B cell (primary cell): ENCODE measurements at regions of chr5 and their contacts with region 1.

Region 1: GRCh38 chr5:170791325-170791954 is 7.9 kb downstream of the GABRP start:
- DNase-seq: peak; percentile 32
- ATAC-seq: no peak
- H3K4me3 ChIP-seq: no peak overlapping the region
- H3K4me3 Mint-ChIP-seq: no peak overlapping the region
- H3K27ac ChIP-seq: no peak overlapping the region
- H3K27ac Mint-ChIP-seq: no peak overlapping the region
- H3K4me1 ChIP-seq: no peaks in the 10 kb centered on the region
- H3K4me1 Mint-ChIP-seq: no peaks in the 10 kb centered on the region
- H3K27me3 ChIP-seq: no peaks in the 10 kb centered on the region
- H3K27me3 Mint-ChIP-seq: peaks cover 5% of the 10 kb centered on the region
- CTCF ChIP-seq: peak; percentile 24

Region 2: GRCh38 chr5:170745481-170746071 is 45.9 kb before region 1 on chr5:
- CTCF ChIA-PET with region 1: interaction called, 41 read pairs
- POLR2A ChIA-PET with region 1: no interaction called
- intact Hi-C with region 1: no loop called
- DNase-seq: no peak
- ATAC-seq: no peak
- H3K4me3 ChIP-seq: no peak overlapping the region
- H3K4me3 Mint-ChIP-seq: no peak overlapping the region
- H3K27ac ChIP-seq: no peak overlapping the region
- H3K27ac Mint-ChIP-seq: no peak overlapping the region
- H3K4me1 ChIP-seq: peaks cover 5 to 7% of the 10 kb centered on the region in 2 donors
- H3K4me1 Mint-ChIP-seq: peaks cover 3% of the 10 kb centered on the region
- H3K27me3 ChIP-seq: peaks cover 0 to 26% (median 2%) of the 10 kb centered on the region in 4 experiments
- H3K27me3 Mint-ChIP-seq: peaks cover 55% of the 10 kb centered on the region
- CTCF ChIP-seq: no peak

Region 3: GRCh38 chr5:170809551-170809950 is 18.1 kb after region 1 on chr5:
- CTCF ChIA-PET with region 1: no interaction called
- POLR2A ChIA-PET with region 1: no interaction called
- intact Hi-C with region 1: no loop called
- DNase-seq: no peak
- ATAC-seq: no peak
- H3K4me3 ChIP-seq: no peak overlapping the region
- H3K4me3 Mint-ChIP-seq: no peak overlapping the region
- H3K27ac ChIP-seq: no peak overlapping the region
- H3K27ac Mint-ChIP-seq: no peak overlapping the region
- H3K4me1 ChIP-seq: no peaks in the 10 kb centered on the region
- H3K4me1 Mint-ChIP-seq: no peaks in the 10 kb centered on the region
- H3K27me3 ChIP-seq: peaks cover 0 to 4% (median 0%) of the 10 kb centered on the region in 4 experiments
- H3K27me3 Mint-ChIP-seq: peaks cover 17% of the 10 kb centered on the region
- CTCF ChIP-seq: no peak

Region 4: GRCh38 chr5:170974461-170974860 is 183.0 kb after region 1 on chr5:
- CTCF ChIA-PET with region 1: no interaction called
- POLR2A ChIA-PET with region 1: no interaction called
- intact Hi-C with region 1: no loop called
- DNase-seq: no peak
- ATAC-seq: no peak
- H3K4me3 ChIP-seq: no peak overlapping the region
- H3K4me3 Mint-ChIP-seq: no peak overlapping the region
- H3K27ac ChIP-seq: no peak overlapping the region
- H3K27ac Mint-ChIP-seq: no peak overlapping the region
- H3K4me1 ChIP-seq: no peaks in the 10 kb centered on the region
- H3K4me1 Mint-ChIP-seq: no peaks in the 10 kb centered on the region
- H3K27me3 ChIP-seq: no peaks in the 10 kb centered on the region
- H3K27me3 Mint-ChIP-seq: no peaks in the 10 kb centered on the region
- CTCF ChIP-seq: no peak